ENCODE measurements at regions of chr15 and their contacts with region 1.

Region 1: DNA sequence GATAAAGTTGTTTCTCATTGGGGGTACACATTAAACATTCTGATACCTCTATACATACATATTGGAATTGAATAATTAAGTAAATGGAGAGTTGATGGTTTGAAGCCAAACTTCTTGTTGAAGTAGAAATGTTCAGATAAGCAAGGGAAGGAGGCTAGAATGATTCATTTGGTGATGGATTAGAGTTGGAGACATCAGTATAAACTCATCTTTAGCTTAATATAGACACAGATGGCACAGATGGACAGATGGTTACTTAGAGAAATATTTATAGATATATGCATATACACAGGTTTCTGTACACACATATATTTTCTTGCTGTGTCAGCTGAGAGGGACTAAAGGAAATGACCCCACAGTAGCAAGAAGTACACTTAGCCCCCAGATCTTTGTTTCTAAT is 69.5 kb downstream of the LRRC49 start:
- DNase-seq: no peak
- H3K4me3 ChIP-seq: no peak overlapping the region
- H3K27me3 ChIP-seq: no peaks in the 10 kb centered on the region
- CTCF ChIP-seq: no peak

Region 2: GRCh38 chr15:70974004-70974832 is 12.1 kb after region 1 on chr15:
- CTCF ChIA-PET with region 1: interaction called, 10 read pairs
- POLR2A ChIA-PET with region 1: no interaction called
- DNase-seq: peak; percentile 24
- H3K4me3 ChIP-seq: no peak overlapping the region
- H3K27me3 ChIP-seq: no peaks in the 10 kb centered on the region
- CTCF ChIP-seq: peak; percentile 50